Panc1 (cell line): ENCODE measurements at regions of chr22 and their contacts with region 1.

Region 1: GRCh38 chr22:22943521-22944267 is 56.1 kb downstream of the IGLL5 start:
- DNase-seq: no peak
- ATAC-seq: no peak
- H3K4me3 ChIP-seq: no peak overlapping the region
- H3K27ac ChIP-seq: no peak overlapping the region
- H3K4me1 ChIP-seq: no peaks in the 10 kb centered on the region
- H3K27me3 ChIP-seq: no peaks in the 10 kb centered on the region
- CTCF ChIP-seq: no peak

Region 2: DNA sequence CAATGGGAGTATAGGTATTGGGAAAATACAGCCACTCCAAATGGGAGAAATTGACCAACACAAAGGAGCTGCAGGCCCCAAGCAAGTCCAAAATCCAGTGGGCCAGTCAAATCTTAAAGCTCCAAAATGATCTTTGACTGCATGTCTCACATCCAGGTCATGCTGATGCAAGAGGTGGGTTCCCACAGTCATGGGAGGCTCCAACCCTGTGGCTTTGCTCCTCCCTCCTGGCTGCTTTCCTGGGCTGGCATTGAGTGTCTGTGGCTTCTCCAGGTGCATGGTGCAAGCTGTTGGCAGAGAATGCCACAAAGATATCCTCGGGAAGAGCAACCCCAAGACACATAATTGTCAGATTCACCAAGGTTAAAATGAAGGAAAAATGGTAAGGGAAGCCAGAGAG is 24.7 kb after region 1 on chr22:
- CTCF ChIA-PET with region 1: no interaction called
- POLR2A ChIA-PET with region 1: interaction called, 11 read pairs
- in situ Hi-C with region 1: no loop called
- intact Hi-C with region 1: no loop called
- DNase-seq: no peak
- ATAC-seq: no peak
- H3K4me3 ChIP-seq: no peak overlapping the region
- H3K27ac ChIP-seq: no peak overlapping the region
- H3K4me1 ChIP-seq: no peaks in the 10 kb centered on the region
- H3K27me3 ChIP-seq: no peaks in the 10 kb centered on the region
- CTCF ChIP-seq: no peak